Mammary epithelial cell (primary cell): ENCODE measurements at regions of chr13 and their contacts with region 1.

Region 1: DNA sequence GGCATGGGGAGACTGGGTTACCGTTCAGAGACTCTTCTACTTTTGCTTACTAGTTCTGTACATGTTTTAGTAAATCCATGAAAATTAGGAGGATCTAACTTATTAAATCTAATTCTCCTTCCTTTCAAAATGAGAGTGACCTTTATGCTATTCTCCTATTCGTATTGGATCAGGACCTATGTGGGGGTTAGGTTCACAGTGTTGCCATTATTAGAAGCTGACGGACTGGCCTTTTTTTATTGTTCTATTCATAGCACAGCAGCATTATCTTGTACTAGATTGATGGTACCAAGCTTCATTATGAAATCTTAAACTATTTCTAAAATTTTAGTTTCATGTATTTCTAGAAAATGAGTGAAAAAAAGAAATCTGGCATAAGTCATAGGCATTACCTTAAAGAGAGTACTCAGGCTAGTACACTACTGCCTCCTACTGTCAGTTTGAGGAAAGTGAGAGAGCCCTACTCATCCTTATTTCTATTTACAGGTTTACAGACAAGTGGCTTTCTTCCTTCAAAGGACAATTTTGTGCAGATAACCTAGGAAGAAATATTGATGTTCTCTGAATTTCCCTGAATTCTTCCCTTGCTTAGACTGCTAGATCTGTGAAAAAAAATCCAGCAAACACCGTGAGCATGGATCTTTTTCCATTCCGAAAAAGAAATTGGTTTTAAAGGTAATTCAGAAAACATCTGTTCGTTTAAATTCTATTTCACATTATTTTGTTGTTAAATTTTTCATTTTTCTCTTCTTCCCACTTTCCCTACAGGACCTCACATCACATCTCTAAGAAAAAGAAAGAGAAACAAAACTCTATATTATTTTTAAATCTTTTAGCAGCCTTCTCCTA is 485.5 kb downstream of the DIAPH3 start:
- DNase-seq: peak; percentile 25
- H3K4me3 ChIP-seq: no peak overlapping the region
- H3K27ac ChIP-seq: no peak overlapping the region
- H3K4me1 ChIP-seq: no peaks in the 10 kb centered on the region
- H3K27me3 ChIP-seq: no peaks in the 10 kb centered on the region
- CTCF ChIP-seq: peak; percentile 82 to 84

Region 2: DNA sequence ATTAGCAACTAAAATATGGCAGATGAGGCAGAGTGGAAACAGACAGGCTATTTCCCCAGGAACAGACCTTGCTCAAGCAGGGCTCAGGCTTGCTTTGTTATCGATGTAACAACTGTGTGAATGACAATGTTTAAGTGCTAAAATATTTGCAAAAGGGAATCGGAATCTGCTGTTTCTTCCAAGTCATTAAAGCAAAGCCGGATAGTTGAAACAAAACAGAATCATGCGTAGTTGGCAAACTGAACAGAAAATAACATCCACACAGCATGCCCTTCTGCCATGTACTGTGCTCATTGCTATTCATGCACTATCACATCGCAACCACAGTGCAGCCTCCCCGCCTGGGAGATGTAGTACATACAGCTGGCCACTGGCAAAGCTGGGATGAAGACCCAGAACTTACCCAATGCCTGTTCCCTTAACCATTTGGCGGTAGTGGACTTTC is 313.5 kb before region 1 on chr13:
- CTCF ChIA-PET with region 1: no interaction called
- dilution Hi-C with region 1: no loop called
- in situ Hi-C with region 1: no loop called
- intact Hi-C with region 1: no loop called
- DNase-seq: no peak
- H3K4me3 ChIP-seq: no peak overlapping the region
- H3K27ac ChIP-seq: no peak overlapping the region
- H3K4me1 ChIP-seq: no peaks in the 10 kb centered on the region
- H3K27me3 ChIP-seq: no peaks in the 10 kb centered on the region
- CTCF ChIP-seq: no peak

Region 3: DNA sequence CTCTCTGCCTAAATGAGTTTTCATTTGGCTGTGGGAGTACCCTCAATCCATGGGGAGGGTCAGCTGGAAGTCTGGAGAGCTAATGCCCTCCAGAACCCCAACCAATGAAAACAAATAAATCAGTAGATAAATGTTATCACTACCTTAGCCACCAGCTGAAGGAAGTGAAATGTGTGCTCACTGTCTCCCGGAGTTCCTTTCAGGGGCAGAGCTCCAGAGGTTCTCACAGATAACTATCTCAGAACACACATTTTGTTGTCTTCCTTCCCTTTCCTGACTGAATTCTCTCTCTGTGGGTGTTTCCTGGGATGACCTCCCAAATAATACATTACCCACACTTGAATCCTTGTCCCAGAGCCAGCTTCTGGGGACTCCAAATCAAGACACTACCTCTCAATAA is 294.0 kb before region 1 on chr13:
- CTCF ChIA-PET with region 1: no interaction called
- dilution Hi-C with region 1: no loop called
- in situ Hi-C with region 1: no loop called
- intact Hi-C with region 1: no loop called
- DNase-seq: no peak
- H3K4me3 ChIP-seq: no peak overlapping the region
- H3K27ac ChIP-seq: no peak overlapping the region
- H3K4me1 ChIP-seq: no peaks in the 10 kb centered on the region
- H3K27me3 ChIP-seq: no peaks in the 10 kb centered on the region
- CTCF ChIP-seq: no peak

Region 4: GRCh38 chr13:59459972-59460371 is 218.2 kb before region 1 on chr13:
- CTCF ChIA-PET with region 1: no interaction called
- dilution Hi-C with region 1: no loop called
- in situ Hi-C with region 1: no loop called
- intact Hi-C with region 1: loop called (anchors 2 kb)
- DNase-seq: no peak
- H3K4me3 ChIP-seq: no peak overlapping the region
- H3K27ac ChIP-seq: no peak overlapping the region
- H3K4me1 ChIP-seq: no peaks in the 10 kb centered on the region
- H3K27me3 ChIP-seq: no peaks in the 10 kb centered on the region
- CTCF ChIP-seq: no peak

Region 5: GRCh38 chr13:59609421-59609820 is 68.8 kb before region 1 on chr13:
- CTCF ChIA-PET with region 1: no interaction called
- dilution Hi-C with region 1: no loop called
- in situ Hi-C with region 1: no loop called
- intact Hi-C with region 1: no loop called
- DNase-seq: no peak
- H3K4me3 ChIP-seq: no peak overlapping the region
- H3K27ac ChIP-seq: no peak overlapping the region
- H3K4me1 ChIP-seq: no peaks in the 10 kb centered on the region
- H3K27me3 ChIP-seq: no peaks in the 10 kb centered on the region
- CTCF ChIP-seq: no peak

Region 6: DNA sequence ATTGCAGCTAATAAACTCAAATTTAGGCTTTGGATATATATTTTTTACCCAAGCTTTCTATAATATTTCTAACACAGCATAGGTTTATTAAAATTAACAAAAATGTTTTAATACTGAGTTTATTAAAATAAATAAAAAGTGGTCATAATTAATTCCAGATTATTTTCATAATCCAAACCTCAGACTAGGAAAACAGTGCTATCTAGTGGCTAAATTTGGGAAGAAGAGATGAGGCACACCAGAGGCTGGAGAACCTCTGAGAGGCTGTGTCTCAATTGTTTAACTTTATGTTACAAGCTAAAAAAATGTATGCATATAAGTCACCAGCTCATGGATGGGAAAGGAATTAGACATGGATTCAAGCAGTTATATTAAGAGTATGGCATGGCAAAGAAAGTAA is 93.1 kb after region 1 on chr13:
- CTCF ChIA-PET with region 1: interaction called, 8 read pairs
- dilution Hi-C with region 1: no loop called
- in situ Hi-C with region 1: loop called in 1 of 2 experiments (anchors 10 kb)
- intact Hi-C with region 1: loop called (anchors 1 kb)
- DNase-seq: no peak
- H3K4me3 ChIP-seq: no peak overlapping the region
- H3K27ac ChIP-seq: no peak overlapping the region
- H3K4me1 ChIP-seq: peaks cover 30% of the 10 kb centered on the region
- H3K27me3 ChIP-seq: no peaks in the 10 kb centered on the region
- CTCF ChIP-seq: peak; percentile 68 to 69

Region 7: GRCh38 chr13:59906413-59907049 is 228.3 kb after region 1 on chr13:
- CTCF ChIA-PET with region 1: interaction called, 3 read pairs
- dilution Hi-C with region 1: no loop called
- in situ Hi-C with region 1: loop called in 1 of 2 experiments (anchors 10 kb)
- intact Hi-C with region 1: loop called (anchors 1 kb)
- DNase-seq: no peak
- H3K4me3 ChIP-seq: no peak overlapping the region
- H3K27ac ChIP-seq: no peak overlapping the region
- H3K4me1 ChIP-seq: no peaks in the 10 kb centered on the region
- H3K27me3 ChIP-seq: no peaks in the 10 kb centered on the region
- CTCF ChIP-seq: peak; percentile 41 to 72

Region 8: DNA sequence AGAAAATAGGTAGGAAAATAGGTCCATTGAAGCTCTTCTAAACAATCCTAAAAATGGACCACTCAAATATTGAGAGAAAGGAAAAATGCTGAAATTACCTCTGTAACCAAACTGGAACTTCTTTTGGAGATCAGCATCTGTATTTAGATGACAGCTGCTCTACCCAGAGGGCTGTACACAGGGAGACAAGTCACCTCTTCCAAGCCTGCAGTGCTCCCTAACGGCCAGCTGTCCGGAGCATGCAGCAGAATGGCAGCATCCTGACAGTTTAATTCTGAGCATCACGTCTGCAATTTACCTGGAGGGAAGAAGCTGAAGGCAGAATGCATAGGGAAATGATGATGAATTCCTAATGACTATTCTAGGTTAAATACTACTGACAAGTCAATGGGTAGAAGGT is 548.3 kb after region 1 on chr13:
- CTCF ChIA-PET with region 1: interaction called, 4 read pairs
- dilution Hi-C with region 1: no loop called
- in situ Hi-C with region 1: no loop called
- intact Hi-C with region 1: loop called (anchors 1 kb)
- DNase-seq: peak; percentile 8
- H3K4me3 ChIP-seq: no peak overlapping the region
- H3K27ac ChIP-seq: no peak overlapping the region
- H3K4me1 ChIP-seq: no peaks in the 10 kb centered on the region
- H3K27me3 ChIP-seq: no peaks in the 10 kb centered on the region
- CTCF ChIP-seq: peak in 1 of 2 donors; percentile 27

Region 9: GRCh38 chr13:60329221-60329983 is 651.2 kb after region 1 on chr13:
- CTCF ChIA-PET with region 1: interaction called, 11 read pairs
- dilution Hi-C with region 1: no loop called
- in situ Hi-C with region 1: no loop called
- intact Hi-C with region 1: loop called (anchors 1 kb)
- DNase-seq: peak; percentile 14
- H3K4me3 ChIP-seq: no peak overlapping the region
- H3K27ac ChIP-seq: no peak overlapping the region
- H3K4me1 ChIP-seq: no peaks in the 10 kb centered on the region
- H3K27me3 ChIP-seq: peaks cover 2% of the 10 kb centered on the region
- CTCF ChIP-seq: peak; percentile 34 to 73

Region 10: DNA sequence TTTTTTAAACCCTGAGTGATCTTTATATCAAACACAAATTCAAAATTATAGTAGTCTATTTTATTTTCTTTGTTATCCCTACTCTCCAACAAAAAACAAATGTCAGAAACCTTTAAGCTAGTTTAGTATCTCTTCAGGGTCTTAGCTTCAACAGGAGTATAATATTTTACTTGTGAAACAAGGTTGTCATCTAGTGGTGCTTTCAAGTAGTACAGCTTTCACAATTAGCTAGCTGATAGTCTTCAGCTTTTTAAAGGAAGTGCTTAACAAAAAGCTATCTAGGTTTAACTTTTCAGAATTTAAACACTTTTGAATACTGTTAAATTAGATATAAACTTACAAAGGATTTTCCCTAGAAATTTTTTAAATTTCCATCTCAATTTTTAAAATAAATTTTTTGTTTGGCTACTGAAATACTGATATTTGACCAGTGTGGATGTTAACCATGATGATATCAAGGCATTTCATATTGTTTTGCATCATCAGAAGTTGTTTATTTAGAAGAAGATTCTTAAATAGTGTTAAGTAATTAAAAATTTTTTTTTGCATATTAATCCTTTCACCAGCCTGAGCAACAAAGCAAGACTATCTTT is 753.0 kb after region 1 on chr13:
- CTCF ChIA-PET with region 1: interaction called, 3 read pairs
- dilution Hi-C with region 1: no loop called
- in situ Hi-C with region 1: no loop called
- intact Hi-C with region 1: loop called (anchors 1 kb)
- DNase-seq: peak; percentile 46
- H3K4me3 ChIP-seq: no peak overlapping the region
- H3K27ac ChIP-seq: no peak overlapping the region
- H3K4me1 ChIP-seq: no peaks in the 10 kb centered on the region
- H3K27me3 ChIP-seq: no peaks in the 10 kb centered on the region
- CTCF ChIP-seq: peak; percentile 91 to 92